Activated naive CD4-positive, alpha-beta T cell treated with anti-CD3 and anti-CD28 coated beads for 36 hours (primary cell): ENCODE measurements at regions of chr4 and their contacts with region 1.

Region 1: GRCh38 chr4:42568610-42569207 is 88.2 kb downstream of the ATP8A1 start:
- DNase-seq: peak; percentile 81
- H3K4me3 Mint-ChIP-seq: no peak overlapping the region
- H3K27ac Mint-ChIP-seq: no peak overlapping the region
- H3K4me1 Mint-ChIP-seq: no peaks in the 10 kb centered on the region
- H3K27me3 Mint-ChIP-seq: no peaks in the 10 kb centered on the region

Region 2: DNA sequence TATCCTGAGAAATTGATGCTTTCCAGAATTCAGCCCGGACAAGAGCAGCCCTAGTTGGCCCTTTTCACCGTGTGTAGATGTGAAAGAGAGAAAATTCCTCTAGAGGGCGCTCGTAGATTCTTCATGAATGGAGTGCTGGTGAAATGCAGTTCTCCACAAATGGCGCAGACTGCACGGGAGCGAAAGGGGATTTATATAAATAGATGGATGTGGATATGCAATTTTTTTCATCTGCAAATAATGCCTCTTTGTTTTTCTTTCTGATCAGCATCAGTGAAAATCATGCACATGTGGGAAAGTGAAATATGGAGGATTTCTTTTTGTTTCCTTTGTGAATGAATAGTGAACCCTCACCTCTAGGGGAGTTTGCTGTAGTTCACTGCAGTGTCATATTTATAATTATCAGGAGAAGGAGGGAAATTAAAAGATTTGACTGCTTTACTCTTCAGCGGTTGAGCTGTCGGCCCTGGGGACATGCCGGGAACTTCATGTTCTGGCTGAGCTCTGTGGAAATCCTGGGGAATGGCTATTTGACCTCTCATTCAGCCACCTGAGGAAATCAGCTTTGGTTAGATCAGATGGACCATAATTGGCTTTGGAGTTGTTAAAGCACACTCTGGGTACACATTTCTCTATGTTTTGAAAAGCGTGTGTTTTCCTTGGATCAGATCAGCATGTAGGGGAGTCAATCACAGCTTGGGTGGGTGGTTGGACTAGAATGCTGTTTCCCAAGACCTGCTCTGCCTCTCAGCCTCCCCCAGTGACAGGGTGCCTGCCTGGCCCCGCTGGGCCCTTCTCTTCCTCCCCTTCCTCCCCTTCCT is 286.4 kb before region 1 on chr4:
- CTCF ChIA-PET with region 1: no interaction called
- intact Hi-C with region 1: loop called (anchors 1 kb)
- DNase-seq: peak; percentile 49
- H3K4me3 Mint-ChIP-seq: no peak overlapping the region
- H3K27ac Mint-ChIP-seq: no peak overlapping the region
- H3K4me1 Mint-ChIP-seq: no peaks in the 10 kb centered on the region
- H3K27me3 Mint-ChIP-seq: peaks cover 24% of the 10 kb centered on the region

Region 3: GRCh38 chr4:42656944-42657792 is 88.5 kb after region 1 on chr4 and contains the start of gene ATP8A1:
- CTCF ChIA-PET with region 1: interaction called, 6 read pairs
- intact Hi-C with region 1: loop called (anchors 1 kb)
- DNase-seq: peak; percentile 92
- H3K4me3 Mint-ChIP-seq: peak within 1 kb of the TSS; percentile 94
- H3K27ac Mint-ChIP-seq: peak within 1 kb of the TSS; percentile 99
- H3K4me1 Mint-ChIP-seq: peaks cover 42% of the 10 kb centered on the region
- H3K27me3 Mint-ChIP-seq: no peaks in the 10 kb centered on the region
- total RNA-seq, gene ATP8A1: 27.6 to 32.0 TPM

Region 4: GRCh38 chr4:42732776-42733175 is 164.1 kb after region 1 on chr4:
- CTCF ChIA-PET with region 1: no interaction called
- intact Hi-C with region 1: no loop called
- DNase-seq: no peak
- H3K4me3 Mint-ChIP-seq: no peak overlapping the region
- H3K27ac Mint-ChIP-seq: no peak overlapping the region
- H3K4me1 Mint-ChIP-seq: no peaks in the 10 kb centered on the region
- H3K27me3 Mint-ChIP-seq: no peaks in the 10 kb centered on the region

Region 5: GRCh38 chr4:42750091-42750490 is 181.4 kb after region 1 on chr4:
- CTCF ChIA-PET with region 1: interaction called, 38 read pairs
- intact Hi-C with region 1: loop called (anchors 1 kb)
- DNase-seq: peak; percentile 58
- H3K4me3 Mint-ChIP-seq: no peak overlapping the region
- H3K27ac Mint-ChIP-seq: no peak overlapping the region
- H3K4me1 Mint-ChIP-seq: peaks cover 3% of the 10 kb centered on the region
- H3K27me3 Mint-ChIP-seq: no peaks in the 10 kb centered on the region

Region 6: DNA sequence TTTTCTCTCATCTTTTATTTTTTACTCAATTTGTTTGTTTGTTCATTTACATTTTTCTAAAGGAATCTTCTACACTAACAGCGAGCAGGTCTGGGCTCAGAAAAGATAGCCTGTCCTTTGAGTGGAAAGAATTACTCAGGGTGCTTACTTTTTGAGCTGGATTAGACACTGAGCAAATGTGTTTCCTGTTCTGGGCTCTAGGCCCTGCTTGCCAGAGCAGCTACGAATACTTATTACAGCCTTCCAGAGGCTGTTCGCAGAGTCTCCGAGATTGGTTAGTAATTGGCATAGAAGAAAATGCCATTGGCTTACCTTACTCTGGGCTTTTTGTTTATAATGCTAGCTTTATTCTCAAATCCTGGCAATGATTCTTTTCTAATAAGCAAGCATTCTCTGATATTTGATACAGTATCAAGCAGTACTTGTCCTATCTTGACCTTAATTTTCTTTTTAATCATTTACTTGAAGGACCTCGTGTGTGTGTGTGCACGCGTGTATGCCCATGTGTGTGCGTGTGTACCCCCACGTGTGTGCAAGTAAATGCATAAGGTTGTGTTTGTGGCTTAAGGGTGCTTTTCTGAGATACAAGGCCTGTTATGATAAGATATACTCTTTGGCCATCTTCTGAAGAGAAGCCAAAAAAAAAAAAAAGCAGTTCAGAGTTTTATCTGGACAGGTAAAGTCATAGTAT is 247.6 kb after region 1 on chr4:
- CTCF ChIA-PET with region 1: interaction called, 14 read pairs
- intact Hi-C with region 1: loop called (anchors 1 kb)
- DNase-seq: no peak
- H3K4me3 Mint-ChIP-seq: no peak overlapping the region
- H3K27ac Mint-ChIP-seq: no peak overlapping the region
- H3K4me1 Mint-ChIP-seq: peaks cover 2% of the 10 kb centered on the region
- H3K27me3 Mint-ChIP-seq: peaks cover 2% of the 10 kb centered on the region

Region 7: DNA sequence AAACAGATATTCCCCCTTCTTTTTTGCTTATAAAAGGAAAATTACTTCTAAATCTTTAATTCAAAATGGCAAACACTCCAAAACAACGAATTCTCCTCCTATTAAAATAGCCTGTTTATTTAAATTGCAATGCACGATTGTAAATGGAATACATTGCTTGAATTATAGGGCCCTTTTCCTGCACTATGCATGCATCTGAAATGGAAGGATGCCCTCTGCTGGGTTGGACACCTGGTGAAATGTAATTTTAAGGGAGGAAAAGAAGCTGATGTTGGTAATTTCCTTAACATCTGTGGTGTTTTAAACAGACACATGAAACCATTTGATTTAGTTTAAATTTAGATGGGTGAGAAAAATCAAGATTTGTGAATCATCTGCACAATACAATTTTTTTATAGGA is 396.6 kb after region 1 on chr4:
- CTCF ChIA-PET with region 1: no interaction called
- intact Hi-C with region 1: loop called (anchors 1 kb)
- DNase-seq: peak; percentile 4
- H3K4me3 Mint-ChIP-seq: no peak overlapping the region
- H3K27ac Mint-ChIP-seq: no peak overlapping the region
- H3K4me1 Mint-ChIP-seq: no peaks in the 10 kb centered on the region
- H3K27me3 Mint-ChIP-seq: peaks cover 4% of the 10 kb centered on the region